ENCODE measurements at regions of chr4 and their contacts with region 1.

Region 1: DNA sequence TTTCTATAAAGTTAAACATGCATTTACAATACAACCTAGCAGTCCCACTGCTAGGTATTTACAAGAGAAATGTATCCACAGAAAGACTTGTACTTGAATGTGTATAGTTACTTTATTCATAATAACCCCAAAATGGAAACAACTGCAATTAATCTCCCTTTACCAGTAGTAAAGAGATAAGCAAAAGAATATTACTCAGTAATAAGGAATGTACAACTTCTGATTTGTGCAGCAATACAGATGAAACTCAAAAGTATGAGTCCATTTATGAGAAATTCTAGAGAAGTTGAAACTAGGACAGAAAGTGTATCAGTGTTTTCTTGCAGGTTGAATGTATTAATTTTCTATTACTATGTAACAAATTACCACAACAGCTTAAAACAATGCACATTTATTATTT is 15.2 kb downstream of the USP53 start:
- DNase-seq: no peak
- H3K4me3 ChIP-seq: no peak overlapping the region
- H3K27ac ChIP-seq: no peak overlapping the region
- H3K4me1 ChIP-seq: no peaks in the 10 kb centered on the region
- H3K27me3 ChIP-seq: no peaks in the 10 kb centered on the region
- CTCF ChIP-seq: no peak

Region 2: DNA sequence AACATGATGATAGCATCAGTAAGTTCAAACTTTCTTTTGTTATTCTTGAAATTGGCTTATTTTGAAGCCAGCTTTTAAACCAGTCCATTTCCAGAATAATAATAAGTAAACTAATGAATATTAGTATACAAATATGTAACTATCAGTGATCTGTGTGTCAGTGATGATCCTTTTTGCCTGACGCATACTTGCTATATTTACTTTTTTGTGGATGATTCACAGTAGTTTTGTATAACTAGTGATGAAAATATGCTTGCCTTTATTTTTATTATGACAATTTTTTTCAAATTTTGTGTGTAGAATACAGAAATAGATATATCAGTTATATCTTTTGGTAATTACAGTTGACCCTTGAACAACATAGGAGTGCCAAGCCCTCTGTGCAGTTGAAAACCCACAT is 34.3 kb after region 1 on chr4:
- intact Hi-C with region 1: loop called (anchors 5 kb)
- DNase-seq: no peak
- H3K4me3 ChIP-seq: no peak overlapping the region
- H3K27ac ChIP-seq: no peak overlapping the region
- H3K4me1 ChIP-seq: no peaks in the 10 kb centered on the region
- H3K27me3 ChIP-seq: no peaks in the 10 kb centered on the region
- CTCF ChIP-seq: no peak

Measured in ascending aorta (tissue), 2 donors.